ENCODE measurements at regions of chr21 and their contacts with region 1.

Region 1: GRCh38 chr21:38544661-38545060 is 46.4 kb upstream of the ERG start:
- DNase-seq: no peak
- H3K4me3 ChIP-seq: no peak overlapping the region
- H3K27ac ChIP-seq: no peak overlapping the region
- H3K4me1 ChIP-seq: peaks cover 0 to 3% (median 0%) of the 10 kb centered on the region in 4 donors
- H3K27me3 ChIP-seq: no peaks in the 10 kb centered on the region
- CTCF ChIP-seq: no peak
- EP300 ChIP-seq: no peak
- POLR2A ChIP-seq: no peak

Region 2: DNA sequence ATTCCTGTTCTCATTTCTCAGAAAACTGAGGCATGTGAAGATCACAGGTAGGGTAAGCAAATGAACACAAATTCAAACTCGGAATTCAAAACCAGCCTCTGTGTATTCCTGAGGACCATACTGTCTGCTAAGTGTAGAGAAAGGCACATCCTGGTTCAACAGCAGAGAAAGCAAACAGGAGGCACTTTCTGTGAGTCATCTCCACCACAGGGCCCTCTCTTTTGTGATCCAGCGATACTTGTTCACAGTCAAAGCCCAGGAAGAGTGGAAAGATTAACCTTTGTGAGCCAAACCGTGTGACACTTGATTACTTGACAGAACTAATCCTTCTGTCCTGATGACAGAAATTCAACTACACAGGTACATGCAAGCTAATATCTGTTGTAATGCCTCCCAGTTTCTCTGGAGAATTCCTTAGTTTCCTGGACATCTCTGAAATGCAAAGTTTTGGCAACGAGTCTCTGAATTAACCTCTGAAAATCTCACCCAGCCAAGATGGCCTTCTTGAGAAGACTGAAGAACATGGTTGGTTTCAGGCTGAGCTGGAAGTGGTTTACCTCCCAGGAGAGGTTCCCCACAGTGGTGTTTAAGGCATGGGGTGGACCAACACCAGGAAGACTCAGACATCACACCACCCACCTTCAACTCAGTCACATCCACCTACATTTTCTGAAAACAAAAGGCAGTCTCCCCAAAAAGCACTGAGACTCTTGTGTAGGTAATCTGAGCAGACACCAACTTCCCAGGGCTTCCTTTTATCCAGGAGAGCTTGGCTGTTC is 51.8 kb after region 1 on chr21:
- in situ Hi-C with region 1: no loop called
- intact Hi-C with region 1: loop called (anchors 2 kb)
- DNase-seq: no peak
- H3K4me3 ChIP-seq: no peak overlapping the region
- H3K27ac ChIP-seq: no peak overlapping the region
- H3K4me1 ChIP-seq: no peaks in the 10 kb centered on the region
- H3K27me3 ChIP-seq: no peaks in the 10 kb centered on the region
- CTCF ChIP-seq: no peak
- EP300 ChIP-seq: no peak
- POLR2A ChIP-seq: no peak

Region 3: DNA sequence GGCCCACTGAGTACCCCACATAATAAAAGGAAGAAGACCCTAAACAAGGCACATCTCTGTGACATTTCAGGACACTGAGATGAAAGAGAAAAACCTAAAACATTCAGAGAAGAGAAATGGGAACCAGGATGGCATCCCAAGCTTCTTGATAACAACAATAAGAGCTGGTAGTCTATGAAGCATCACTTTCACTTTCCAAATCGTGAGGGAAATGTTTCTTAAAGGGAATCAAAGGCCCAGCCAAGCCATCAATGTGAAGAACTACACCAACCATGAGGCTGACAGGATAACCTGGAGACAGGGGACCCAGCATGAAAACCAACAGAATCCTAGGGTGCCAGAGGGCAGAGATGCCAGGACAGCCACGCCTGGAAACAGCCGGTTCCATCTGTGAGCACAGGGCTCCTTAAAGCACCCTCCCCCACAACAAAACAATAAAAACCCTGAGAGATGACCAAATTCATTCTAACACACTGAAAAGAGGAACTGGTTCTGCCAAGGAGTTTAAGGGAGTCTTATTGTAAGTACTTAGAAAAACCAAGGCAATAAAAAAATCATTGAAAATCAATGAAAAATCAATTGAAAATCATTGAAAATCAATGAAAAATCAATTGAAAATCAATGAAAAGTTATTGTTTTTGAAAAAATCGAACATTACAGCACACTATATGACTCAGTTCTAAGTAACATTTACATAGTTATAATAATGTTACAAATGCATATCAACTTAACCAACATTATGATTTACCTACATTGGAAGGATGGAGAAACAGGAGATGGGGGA is 95.1 kb after region 1 on chr21:
- in situ Hi-C with region 1: no loop called
- intact Hi-C with region 1: no loop called
- DNase-seq: no peak
- H3K4me3 ChIP-seq: no peak overlapping the region
- H3K27ac ChIP-seq: no peak overlapping the region
- H3K4me1 ChIP-seq: no peaks in the 10 kb centered on the region
- H3K27me3 ChIP-seq: no peaks in the 10 kb centered on the region
- CTCF ChIP-seq: no peak
- EP300 ChIP-seq: no peak
- POLR2A ChIP-seq: no peak

Measured in transverse colon (tissue), 4 donors.